A549 (cell line): ENCODE measurements at regions of chr18 and their contacts with region 1.

Region 1: DNA sequence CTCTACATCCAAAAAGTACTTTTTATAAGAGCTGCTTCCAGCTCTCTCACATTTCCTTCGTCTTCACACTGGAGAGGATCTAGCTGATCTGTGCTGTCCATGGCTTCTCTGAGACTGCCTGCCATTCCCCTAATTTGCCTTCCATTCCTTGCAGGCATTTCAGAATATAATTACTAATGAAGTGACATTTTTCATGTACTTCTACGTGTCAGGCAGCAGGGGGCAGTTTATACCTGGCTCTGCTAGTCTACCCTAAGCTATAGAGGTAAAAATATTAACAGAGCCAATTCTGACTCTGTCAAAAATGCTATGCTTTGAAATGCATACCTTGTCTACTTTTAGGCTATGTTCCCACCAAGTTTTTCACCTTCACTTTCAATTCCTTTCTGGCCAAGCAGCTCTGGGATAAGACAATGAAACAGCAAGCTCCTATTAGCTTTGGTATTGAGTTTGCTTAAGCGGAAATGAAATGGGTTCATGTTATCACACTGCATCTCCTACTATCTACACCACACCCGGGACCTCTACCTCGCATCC is 81.9 kb downstream of the MEP1B start:
- DNase-seq: peak; percentile 37 to 40
- ATAC-seq: peak; percentile 59 to 78; a peak in 4 of 6 replicates
- H3K4me3 ChIP-seq: no peak overlapping the region
- H3K27ac ChIP-seq: no peak overlapping the region
- H3K4me1 ChIP-seq: no peaks in the 10 kb centered on the region
- CTCF ChIP-seq: peak; percentile 66
- EP300 ChIP-seq: no peak
- POLR2A ChIP-seq: no peak
- RAD21 ChIP-seq: peak; percentile 76 to 77

Region 2: DNA sequence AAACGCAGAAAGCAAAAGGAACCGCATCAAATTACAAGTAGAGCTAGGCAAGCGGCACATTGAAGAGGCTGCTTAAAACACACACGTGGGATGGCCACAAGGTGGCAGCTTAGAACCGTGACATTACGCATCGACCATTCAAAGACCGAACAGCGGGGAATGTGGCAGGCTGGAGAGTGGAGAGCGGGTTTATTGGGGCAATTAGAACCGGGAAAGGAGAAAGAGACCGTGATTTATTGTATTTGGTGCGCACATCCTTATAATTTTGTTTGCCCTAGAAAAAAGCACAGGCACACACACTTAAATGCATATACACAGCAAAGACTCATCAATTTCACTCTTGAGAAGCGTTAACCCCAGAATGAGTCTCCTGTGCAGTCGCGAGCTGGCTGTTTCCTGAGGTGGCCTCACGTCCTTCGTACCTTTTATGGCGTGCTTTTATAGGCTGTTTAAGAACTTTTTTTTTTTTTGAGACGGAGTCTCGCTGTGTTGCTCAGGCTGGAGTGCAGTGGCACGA is 113.6 kb before region 1 on chr18:
- CTCF ChIA-PET with region 1: interaction called, 25 read pairs
- POLR2A ChIA-PET with region 1: no interaction called
- DNase-seq: peak; percentile 40 to 81
- ATAC-seq: peak; percentile 99
- H3K4me3 ChIP-seq: no peak overlapping the region
- H3K27ac ChIP-seq: no peak overlapping the region
- H3K4me1 ChIP-seq: no peaks in the 10 kb centered on the region
- CTCF ChIP-seq: peak; percentile 72
- EP300 ChIP-seq: no peak
- POLR2A ChIP-seq: no peak
- RAD21 ChIP-seq: peak; percentile 84 to 86

Region 3: DNA sequence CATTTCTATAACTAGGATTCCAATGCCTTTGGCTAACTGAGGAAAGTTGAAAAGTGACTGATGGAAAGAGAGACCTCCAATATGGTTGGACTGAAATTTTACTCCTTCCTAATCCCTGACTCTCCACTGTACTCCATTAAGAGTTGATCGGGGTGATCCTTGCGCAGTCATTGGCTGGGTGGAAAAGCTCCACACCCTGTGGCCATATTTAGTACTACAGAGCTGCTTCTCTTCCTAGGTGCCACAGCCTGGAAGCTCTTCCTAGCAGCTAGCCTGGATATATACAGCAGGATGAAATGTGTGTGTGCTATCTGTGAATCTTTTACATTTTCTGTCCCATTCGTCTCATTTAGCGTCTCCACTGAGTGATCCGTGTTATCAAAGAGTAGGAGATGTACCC is 10.7 kb before region 1 on chr18:
- CTCF ChIA-PET with region 1: interaction called, 18 read pairs
- POLR2A ChIA-PET with region 1: no interaction called
- DNase-seq: no peak
- ATAC-seq: peak; percentile 59 to 79; a peak in 4 of 6 replicates
- H3K4me3 ChIP-seq: no peak overlapping the region
- H3K27ac ChIP-seq: no peak overlapping the region
- H3K4me1 ChIP-seq: no peaks in the 10 kb centered on the region
- CTCF ChIP-seq: no peak
- EP300 ChIP-seq: no peak
- POLR2A ChIP-seq: no peak
- RAD21 ChIP-seq: no peak

Region 4: GRCh38 chr18:32289483-32290075 is 17.8 kb after region 1 on chr18:
- CTCF ChIA-PET with region 1: interaction called, 12 read pairs
- POLR2A ChIA-PET with region 1: no interaction called
- DNase-seq: peak; percentile 31 to 58
- ATAC-seq: peak; percentile 81 to 90
- H3K4me3 ChIP-seq: no peak overlapping the region
- H3K27ac ChIP-seq: no peak overlapping the region
- H3K4me1 ChIP-seq: no peaks in the 10 kb centered on the region
- CTCF ChIP-seq: peak; percentile 65
- EP300 ChIP-seq: no peak
- POLR2A ChIP-seq: no peak
- RAD21 ChIP-seq: peak; percentile 57 to 66

Region 5: GRCh38 chr18:32552421-32553030 is 280.8 kb after region 1 on chr18:
- CTCF ChIA-PET with region 1: interaction called, 124 read pairs
- POLR2A ChIA-PET with region 1: no interaction called
- DNase-seq: peak; percentile 34 to 70
- ATAC-seq: peak; percentile 70 to 84; a peak in 5 of 6 replicates
- H3K4me3 ChIP-seq: no peak overlapping the region
- H3K27ac ChIP-seq: no peak overlapping the region
- H3K4me1 ChIP-seq: no peaks in the 10 kb centered on the region
- CTCF ChIP-seq: peak; percentile 55
- EP300 ChIP-seq: no peak
- POLR2A ChIP-seq: no peak
- RAD21 ChIP-seq: peak; percentile 58 to 61; a peak in 4 of 5 replicates

Region 6: GRCh38 chr18:33424266-33424946 is 1152.7 kb after region 1 on chr18:
- CTCF ChIA-PET with region 1: no interaction called
- POLR2A ChIA-PET with region 1: no interaction called
- DNase-seq: no peak
- ATAC-seq: no peak
- H3K4me3 ChIP-seq: no peak overlapping the region
- H3K27ac ChIP-seq: no peak overlapping the region
- H3K4me1 ChIP-seq: no peaks in the 10 kb centered on the region
- CTCF ChIP-seq: no peak
- EP300 ChIP-seq: no peak
- POLR2A ChIP-seq: no peak
- RAD21 ChIP-seq: no peak